Naive thymus-derived CD4-positive, alpha-beta T cell (primary cell): ENCODE measurements at regions of chr20 and their contacts with region 1.

Region 1: GRCh38 chr20:53448875-53449274 is 144.8 kb downstream of the ZNF217 start:
- DNase-seq: no peak
- ATAC-seq: no peak
- H3K4me3 ChIP-seq: no peak overlapping the region
- H3K4me3 Mint-ChIP-seq: no peak overlapping the region
- H3K27ac ChIP-seq: no peak overlapping the region
- H3K27ac Mint-ChIP-seq: peak overlapping the region in 1 of 9 donors; percentile 21
- H3K4me1 ChIP-seq: no peaks in the 10 kb centered on the region
- H3K4me1 Mint-ChIP-seq: peaks cover 0 to 6% (median 0%) of the 10 kb centered on the region in 7 donors
- H3K27me3 ChIP-seq: no peaks in the 10 kb centered on the region
- H3K27me3 Mint-ChIP-seq: no peaks in the 10 kb centered on the region

Region 2: DNA sequence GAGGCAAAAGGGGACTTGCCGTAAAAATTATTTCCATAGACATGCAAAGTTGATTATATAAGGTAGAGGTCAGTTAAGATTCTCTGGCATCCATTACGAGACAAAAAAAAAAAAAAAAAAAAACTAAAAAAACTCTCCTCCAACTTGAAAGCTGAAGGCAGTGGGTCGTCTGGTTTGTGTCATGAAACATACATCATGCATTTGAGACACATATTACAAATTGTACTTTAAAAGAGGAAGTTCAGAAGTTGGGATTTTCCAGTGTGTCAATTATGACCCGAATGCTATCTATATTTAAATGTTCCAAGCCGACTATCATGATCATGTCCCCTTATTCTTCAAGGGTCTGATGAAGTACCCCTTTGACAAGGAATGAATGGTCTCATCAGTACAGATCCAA is 19.7 kb after region 1 on chr20:
- CTCF ChIA-PET with region 1: no interaction called
- POLR2A ChIA-PET with region 1: no interaction called
- intact Hi-C with region 1: loop called in 1 of 2 experiments (anchors 1 kb)
- DNase-seq: no peak
- ATAC-seq: no peak
- H3K4me3 ChIP-seq: no peak overlapping the region
- H3K4me3 Mint-ChIP-seq: no peak overlapping the region
- H3K27ac ChIP-seq: no peak overlapping the region
- H3K27ac Mint-ChIP-seq: no peak overlapping the region
- H3K4me1 ChIP-seq: no peaks in the 10 kb centered on the region
- H3K4me1 Mint-ChIP-seq: peaks cover 0 to 4% (median 0%) of the 10 kb centered on the region in 7 donors
- H3K27me3 ChIP-seq: no peaks in the 10 kb centered on the region
- H3K27me3 Mint-ChIP-seq: peaks cover 0 to 2% (median 0%) of the 10 kb centered on the region in 5 donors

Region 3: GRCh38 chr20:53513301-53514298 is 64.7 kb after region 1 on chr20:
- CTCF ChIA-PET with region 1: no interaction called
- POLR2A ChIA-PET with region 1: no interaction called
- intact Hi-C with region 1: no loop called
- DNase-seq: no peak
- ATAC-seq: no peak
- H3K4me3 ChIP-seq: no peak overlapping the region
- H3K4me3 Mint-ChIP-seq: no peak overlapping the region
- H3K27ac ChIP-seq: no peak overlapping the region
- H3K27ac Mint-ChIP-seq: no peak overlapping the region
- H3K4me1 ChIP-seq: no peaks in the 10 kb centered on the region
- H3K4me1 Mint-ChIP-seq: no peaks in the 10 kb centered on the region
- H3K27me3 ChIP-seq: no peaks in the 10 kb centered on the region
- H3K27me3 Mint-ChIP-seq: peaks cover 0 to 3% (median 0%) of the 10 kb centered on the region in 5 donors